Activated B cell treated with CpG ODN at 0.5 μM for 24 hours (primary cell): ENCODE measurements at regions of chr4 and their contacts with region 1.

Region 1: DNA sequence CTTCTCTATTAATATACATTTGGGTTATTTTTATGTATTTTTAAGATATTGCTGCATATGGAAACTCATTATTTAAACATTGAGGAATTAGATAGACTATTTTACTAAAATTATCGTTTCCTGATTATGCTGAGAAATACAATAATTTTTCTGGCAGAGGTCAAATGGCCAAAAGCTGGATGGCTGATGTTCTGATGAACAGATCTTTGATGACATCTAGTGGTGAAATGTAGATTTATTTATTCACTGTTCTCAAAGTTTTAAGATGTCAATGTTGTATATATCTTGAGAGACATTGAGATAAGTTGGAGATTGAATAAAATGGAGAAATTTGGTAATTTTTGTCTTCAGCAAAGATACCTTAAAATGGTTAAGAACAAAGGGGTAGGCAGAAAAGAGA is 96.2 kb downstream of the UGT8 start:
- DNase-seq: no peak
- ATAC-seq: no peak
- H3K4me3 Mint-ChIP-seq: no peak overlapping the region
- H3K27ac Mint-ChIP-seq: no peak overlapping the region
- H3K4me1 Mint-ChIP-seq: peaks cover 14% of the 10 kb centered on the region
- H3K27me3 Mint-ChIP-seq: no peaks in the 10 kb centered on the region
- CTCF ChIP-seq: peak; percentile 43

Region 2: DNA sequence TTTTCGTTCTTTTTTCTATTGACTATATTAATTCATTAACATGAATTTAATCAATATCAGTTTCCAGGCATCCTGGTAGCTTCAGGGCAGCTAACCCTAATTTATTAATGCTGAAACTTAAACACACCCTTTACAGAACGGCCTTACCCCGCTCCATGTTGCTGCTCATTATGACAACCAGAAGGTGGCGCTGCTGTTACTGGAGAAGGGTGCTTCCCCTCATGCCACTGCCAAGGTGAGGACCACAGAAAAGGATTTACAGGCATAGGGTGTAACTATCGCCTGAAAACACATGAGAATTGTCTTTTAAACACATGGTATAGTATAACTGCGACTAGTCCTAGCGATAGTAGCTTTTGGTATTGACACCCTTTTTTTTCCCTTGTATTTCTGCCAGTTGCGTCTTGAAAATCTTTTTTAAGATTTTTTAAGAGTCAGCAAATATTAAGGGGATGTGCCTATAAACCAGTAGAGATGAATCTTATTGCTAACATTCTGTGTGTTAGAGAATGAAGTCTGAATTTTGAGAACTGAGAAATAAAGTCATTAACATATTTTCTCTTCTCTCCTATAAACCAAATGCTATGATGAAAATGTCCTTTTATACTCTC is 1416.3 kb before region 1 on chr4:
- CTCF ChIA-PET with region 1: no interaction called
- POLR2A ChIA-PET with region 1: no interaction called
- intact Hi-C with region 1: loop called (anchors 10 kb)
- DNase-seq: no peak
- ATAC-seq: peak; percentile 72
- H3K4me3 Mint-ChIP-seq: no peak overlapping the region
- H3K27ac Mint-ChIP-seq: no peak overlapping the region
- H3K4me1 Mint-ChIP-seq: no peaks in the 10 kb centered on the region
- H3K27me3 Mint-ChIP-seq: no peaks in the 10 kb centered on the region
- CTCF ChIP-seq: no peak

Region 3: DNA sequence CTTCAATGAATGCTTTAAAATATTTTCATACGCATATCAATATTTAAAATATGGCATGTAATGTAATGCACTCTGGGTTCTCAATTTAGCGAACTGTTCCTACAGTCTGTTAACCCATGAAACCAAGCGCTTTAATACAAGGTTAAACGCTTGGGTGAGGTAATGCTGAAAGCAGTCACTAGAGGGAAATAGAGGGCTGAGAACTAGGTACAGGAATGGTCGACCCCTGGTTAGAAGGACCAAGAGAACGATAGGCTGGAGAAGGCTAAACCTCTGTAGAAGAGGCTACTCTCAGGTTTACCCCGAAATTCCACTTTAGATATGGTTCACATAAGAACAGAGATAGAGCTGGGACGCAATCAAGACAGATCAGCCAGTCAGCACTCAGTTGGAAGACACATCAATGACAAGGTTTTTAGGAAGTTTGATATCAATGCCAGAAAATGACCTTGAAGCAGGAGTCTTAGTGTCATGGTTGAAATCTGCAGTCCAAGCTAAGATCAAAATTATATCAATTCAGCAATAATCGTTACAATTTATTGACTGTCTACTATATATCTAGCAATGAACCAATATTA is 742.2 kb before region 1 on chr4:
- CTCF ChIA-PET with region 1: no interaction called
- POLR2A ChIA-PET with region 1: no interaction called
- intact Hi-C with region 1: loop called (anchors 1 kb)
- DNase-seq: no peak
- ATAC-seq: peak; percentile 71
- H3K4me3 Mint-ChIP-seq: no peak overlapping the region
- H3K27ac Mint-ChIP-seq: no peak overlapping the region
- H3K4me1 Mint-ChIP-seq: peaks cover 2% of the 10 kb centered on the region
- H3K27me3 Mint-ChIP-seq: peaks cover 16% of the 10 kb centered on the region
- CTCF ChIP-seq: peak; percentile 55

Region 4: GRCh38 chr4:114717432-114717831 is 22.7 kb after region 1 on chr4:
- CTCF ChIA-PET with region 1: no interaction called
- POLR2A ChIA-PET with region 1: no interaction called
- intact Hi-C with region 1: no loop called
- DNase-seq: no peak
- ATAC-seq: no peak
- H3K4me3 Mint-ChIP-seq: no peak overlapping the region
- H3K27ac Mint-ChIP-seq: no peak overlapping the region
- H3K4me1 Mint-ChIP-seq: no peaks in the 10 kb centered on the region
- H3K27me3 Mint-ChIP-seq: no peaks in the 10 kb centered on the region
- CTCF ChIP-seq: no peak